ENCODE measurements at regions of chr3 and their contacts with region 1.

Region 1: DNA sequence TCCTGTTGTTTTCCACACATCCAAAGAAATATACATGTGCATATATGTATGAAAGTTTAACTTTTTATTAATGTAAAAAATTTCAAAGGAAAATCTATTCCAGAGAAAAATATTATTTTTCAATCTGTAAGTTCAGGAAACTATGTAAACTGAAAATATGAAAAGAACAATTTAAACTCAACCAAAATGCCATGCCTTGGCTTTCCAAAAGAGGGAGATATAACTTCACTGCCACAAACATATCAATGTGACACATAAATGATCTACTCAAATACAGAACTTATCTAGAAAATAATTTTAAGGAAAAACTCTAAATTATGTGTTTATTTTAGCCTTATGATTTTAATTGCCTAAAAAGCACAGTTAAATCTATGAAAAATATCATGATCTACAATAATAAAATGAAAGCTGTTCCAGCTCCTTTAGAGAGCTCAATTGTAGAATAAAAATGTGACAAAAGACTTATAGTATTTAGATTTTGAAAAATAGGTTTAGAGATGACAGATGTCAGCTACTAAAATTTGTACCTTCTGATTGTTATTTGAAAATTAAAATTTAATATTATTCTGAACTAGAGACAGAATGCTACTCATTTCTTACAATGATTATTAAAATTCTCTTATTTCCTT is 94.8 kb downstream of the GBE1 start:
- DNase-seq: no peak
- ATAC-seq: peak in 1 of 4 donors; percentile 44
- H3K4me3 ChIP-seq: no peak overlapping the region
- H3K27ac ChIP-seq: no peak overlapping the region
- H3K4me1 ChIP-seq: peaks cover 0 to 35% (median 12%) of the 10 kb centered on the region in 12 donors
- H3K27me3 ChIP-seq: no peaks in the 10 kb centered on the region
- CTCF ChIP-seq: peak; percentile 57 to 88 (median 78)
- POLR2A ChIP-seq: no peak

Region 2: GRCh38 chr3:81910244-81910852 is 243.7 kb after region 1 on chr3:
- intact Hi-C with region 1: loop called in 4 of 10 experiments (anchors 5 to 10 kb)
- DNase-seq: peak in 1 of 5 donors; percentile 12
- ATAC-seq: peak in 1 of 4 donors; percentile 63
- H3K4me3 ChIP-seq: no peak overlapping the region
- H3K27ac ChIP-seq: no peak overlapping the region
- H3K4me1 ChIP-seq: peaks cover 0 to 5% (median 0%) of the 10 kb centered on the region in 12 donors
- H3K27me3 ChIP-seq: no peaks in the 10 kb centered on the region
- CTCF ChIP-seq: peak; percentile 45 to 82 (median 74)
- POLR2A ChIP-seq: no peak

Measured in heart left ventricle (tissue), 16 donors.